Heart left ventricle (tissue), 16 donors: ENCODE measurements at regions of chr4 and their contacts with region 1.

Region 1: DNA sequence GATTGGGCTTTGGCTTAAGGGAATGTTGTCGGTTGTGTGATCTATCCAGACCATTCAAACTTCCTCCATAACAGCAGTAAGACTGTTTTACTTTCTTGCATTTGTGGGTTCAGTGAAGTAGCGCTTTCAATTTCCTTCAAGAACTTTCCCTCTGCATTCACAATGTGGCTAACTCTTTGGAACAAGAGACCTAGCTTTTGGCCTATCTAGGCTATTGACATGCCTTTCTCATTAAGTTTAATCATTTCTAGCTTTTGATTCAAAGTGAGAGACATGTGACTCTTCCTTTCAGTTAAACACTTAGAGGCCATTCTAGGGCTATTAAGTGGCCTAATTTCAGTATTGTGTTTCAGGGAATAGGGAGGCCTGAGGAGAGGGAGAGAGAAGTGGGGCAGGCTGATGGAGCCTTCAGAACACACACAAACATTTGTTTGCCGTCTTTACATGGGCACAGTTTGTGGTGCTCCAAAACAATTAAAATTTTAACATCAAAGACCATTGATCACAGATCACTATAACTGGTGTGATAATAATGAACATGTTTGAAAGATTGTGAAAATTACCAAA is 34.1 kb downstream of the ADH5 start:
- DNase-seq: no peak
- ATAC-seq: no peak
- H3K4me3 ChIP-seq: no peak overlapping the region
- H3K27ac ChIP-seq: no peak overlapping the region
- H3K4me1 ChIP-seq: peaks cover 0 to 25% (median 4%) of the 10 kb centered on the region in 12 donors
- H3K27me3 ChIP-seq: no peaks in the 10 kb centered on the region
- CTCF ChIP-seq: no peak
- POLR2A ChIP-seq: no peak

Region 2: DNA sequence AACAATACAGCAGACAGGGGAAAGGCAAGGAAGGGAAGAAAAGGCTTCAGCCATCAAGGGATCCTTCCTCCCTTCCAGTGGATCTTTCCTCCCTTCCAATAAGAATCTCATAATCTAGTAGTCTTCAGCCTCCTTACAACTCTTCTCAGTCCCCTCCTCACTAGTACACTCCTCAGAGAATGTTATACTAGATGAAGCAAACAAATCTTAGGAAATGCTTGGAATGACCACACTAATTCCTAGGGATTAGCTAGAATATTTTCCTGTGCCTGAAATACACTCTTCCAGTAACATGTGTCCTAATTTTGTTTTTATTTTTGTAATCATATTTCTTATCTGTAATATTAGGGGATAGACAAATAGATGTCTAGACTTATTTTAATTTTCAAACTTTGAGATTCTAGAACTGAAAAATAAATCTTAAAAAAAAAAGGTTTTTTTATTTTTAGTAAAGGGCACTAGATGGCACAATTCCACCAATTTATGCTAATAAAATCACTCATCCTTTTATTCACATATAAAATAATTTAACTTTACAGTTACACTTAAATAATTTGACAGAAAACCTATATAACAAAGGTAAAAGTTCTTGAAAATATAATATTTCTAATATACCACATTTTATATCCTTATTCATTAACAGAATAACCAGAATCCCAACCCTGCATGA is 904.3 kb before region 1 on chr4:
- intact Hi-C with region 1: loop called in 5 of 10 experiments (anchors 10 kb)
- DNase-seq: no peak
- ATAC-seq: no peak
- H3K4me3 ChIP-seq: no peak overlapping the region
- H3K27ac ChIP-seq: no peak overlapping the region
- H3K4me1 ChIP-seq: peaks cover 0 to 9% (median 0%) of the 10 kb centered on the region in 12 donors
- H3K27me3 ChIP-seq: no peaks in the 10 kb centered on the region
- CTCF ChIP-seq: peak in 5 of 12 donors; percentile 31 to 40 (median 37)
- POLR2A ChIP-seq: no peak

Region 3: DNA sequence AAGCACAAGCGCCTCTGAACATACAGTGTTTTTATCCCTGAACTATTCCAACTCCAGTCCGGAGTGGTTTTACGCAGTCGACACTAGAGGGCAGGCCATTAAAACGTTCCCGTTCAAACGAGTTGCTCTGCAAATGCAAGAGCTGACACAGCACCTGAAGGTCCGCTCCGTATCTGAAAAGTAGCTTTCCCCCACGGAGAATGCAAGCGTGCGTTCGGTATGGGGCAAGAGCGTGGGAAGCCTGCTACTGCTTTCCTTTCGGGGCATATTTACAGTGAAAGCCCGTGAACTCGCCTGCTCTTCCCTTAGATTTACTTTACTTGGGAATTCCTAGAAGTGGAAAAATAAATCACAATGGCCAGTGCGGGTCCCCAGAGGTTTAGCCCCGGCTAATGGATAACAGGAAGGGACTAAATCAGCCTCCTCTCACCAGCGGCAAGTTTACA is 586.9 kb before region 1 on chr4:
- intact Hi-C with region 1: loop called in 6 of 10 experiments (anchors 5 to 10 kb)
- DNase-seq: peak; percentile 66 to 78 (median 73)
- ATAC-seq: peak; percentile 58 to 97 (median 92)
- H3K4me3 ChIP-seq: peak overlapping the region in 11 of 12 donors; percentile 20 to 53 (median 45)
- H3K27ac ChIP-seq: no peak overlapping the region
- H3K4me1 ChIP-seq: peaks cover 0 to 20% (median 10%) of the 10 kb centered on the region in 12 donors
- H3K27me3 ChIP-seq: no peaks in the 10 kb centered on the region
- CTCF ChIP-seq: peak; percentile 57 to 82 (median 71)
- POLR2A ChIP-seq: no peak

Region 4: GRCh38 chr4:98939892-98940298 is 114.6 kb before region 1 on chr4:
- intact Hi-C with region 1: loop called in 8 of 10 experiments (anchors 2 to 10 kb)
- DNase-seq: no peak
- ATAC-seq: peak in 3 of 4 donors; percentile 42 to 55 (median 45)
- H3K4me3 ChIP-seq: no peak overlapping the region
- H3K27ac ChIP-seq: no peak overlapping the region
- H3K4me1 ChIP-seq: no peaks in the 10 kb centered on the region
- H3K27me3 ChIP-seq: no peaks in the 10 kb centered on the region
- CTCF ChIP-seq: peak; percentile 58 to 82 (median 70)
- POLR2A ChIP-seq: no peak

Region 5: GRCh38 chr4:99405433-99406115 is 351.1 kb after region 1 on chr4:
- intact Hi-C with region 1: no loop called
- DNase-seq: peak in 4 of 5 donors; percentile 39 to 68 (median 53)
- ATAC-seq: peak; percentile 62 to 86 (median 79)
- H3K4me3 ChIP-seq: no peak overlapping the region
- H3K27ac ChIP-seq: peak overlapping the region in 11 of 12 donors; percentile 35 to 80 (median 60)
- H3K4me1 ChIP-seq: peaks cover 0 to 20% (median 4%) of the 10 kb centered on the region in 12 donors
- H3K27me3 ChIP-seq: no peaks in the 10 kb centered on the region
- CTCF ChIP-seq: peak; percentile 75 to 97 (median 94)
- POLR2A ChIP-seq: no peak